ENCODE measurements at regions of chr10 and their contacts with region 1.

Region 1: DNA sequence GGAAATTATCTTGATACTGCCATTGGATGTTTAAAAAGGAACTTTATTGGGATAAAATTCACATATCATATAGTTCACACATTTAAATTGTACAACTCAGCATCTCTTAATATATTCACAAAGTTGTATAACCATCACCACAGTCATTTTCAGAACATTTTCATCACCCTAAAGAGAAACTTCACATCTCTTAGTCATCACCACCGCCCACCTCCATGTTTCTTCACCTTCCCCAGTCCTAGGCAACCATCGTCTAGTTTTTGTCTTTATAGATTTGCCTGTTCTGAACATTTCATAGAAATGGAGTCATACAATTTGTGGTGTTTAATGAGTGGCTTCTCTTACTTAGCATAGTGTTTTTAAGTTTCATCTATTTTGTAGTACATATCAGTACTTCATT is 96.6 kb downstream of the ANKRD30A start:
- DNase-seq: no peak
- H3K4me3 ChIP-seq: no peak overlapping the region
- H3K27ac ChIP-seq: no peak overlapping the region
- H3K4me1 ChIP-seq: no peaks in the 10 kb centered on the region
- H3K27me3 ChIP-seq: no peaks in the 10 kb centered on the region
- CTCF ChIP-seq: no peak
- EP300 ChIP-seq: no peak
- POLR2A ChIP-seq: no peak

Region 2: DNA sequence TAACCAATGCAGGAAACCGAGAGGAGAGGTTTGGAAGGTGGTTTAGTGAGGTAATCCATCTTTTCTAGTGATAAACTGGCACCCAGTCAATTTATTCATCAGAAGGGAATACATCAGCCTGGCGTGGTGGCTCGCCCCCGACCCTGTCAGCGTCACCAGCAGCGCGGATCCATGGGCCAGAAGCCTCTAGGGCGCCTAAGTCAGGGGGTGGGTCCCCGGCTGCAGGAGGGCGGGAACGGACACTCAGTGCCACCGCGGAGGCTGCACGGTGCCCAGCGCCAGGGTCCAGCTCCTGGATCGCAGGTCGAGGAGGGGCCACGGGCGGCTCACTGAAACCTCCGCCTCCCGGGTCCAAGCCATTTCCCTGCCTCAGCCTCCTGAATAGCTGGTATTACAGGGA is 97.5 kb before region 1 on chr10:
- in situ Hi-C with region 1: loop called in 1 of 4 experiments (anchors 25 kb)
- intact Hi-C with region 1: no loop called
- DNase-seq: no peak
- H3K4me3 ChIP-seq: no peak overlapping the region
- H3K27ac ChIP-seq: no peak overlapping the region
- H3K4me1 ChIP-seq: no peaks in the 10 kb centered on the region
- H3K27me3 ChIP-seq: no peaks in the 10 kb centered on the region
- CTCF ChIP-seq: no peak
- EP300 ChIP-seq: no peak
- POLR2A ChIP-seq: no peak

Region 3: DNA sequence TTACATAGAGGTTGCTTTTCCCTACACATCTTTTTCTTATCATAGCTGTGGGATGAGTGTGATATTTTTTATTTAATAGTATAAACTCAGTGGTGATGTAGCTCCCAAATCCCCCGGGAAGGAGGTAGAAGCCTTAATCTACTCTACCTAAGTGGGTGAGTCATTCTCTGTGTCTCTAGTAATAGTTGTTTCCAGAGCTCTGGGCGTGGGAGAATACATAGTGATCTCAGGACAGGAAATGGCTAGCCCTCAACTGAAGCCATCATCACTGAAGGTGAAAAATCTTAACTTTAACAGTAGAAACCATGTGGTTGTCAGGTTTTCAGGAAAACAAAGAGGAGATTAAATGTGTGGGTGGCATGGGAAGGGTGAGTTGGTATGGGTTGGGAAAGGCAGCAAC is 181.7 kb after region 1 on chr10:
- in situ Hi-C with region 1: no loop called
- intact Hi-C with region 1: no loop called
- DNase-seq: no peak
- H3K4me3 ChIP-seq: no peak overlapping the region
- H3K27ac ChIP-seq: no peak overlapping the region
- H3K4me1 ChIP-seq: no peaks in the 10 kb centered on the region
- H3K27me3 ChIP-seq: no peaks in the 10 kb centered on the region
- CTCF ChIP-seq: no peak
- EP300 ChIP-seq: no peak
- POLR2A ChIP-seq: no peak

Measured in transverse colon (tissue), 4 donors.